Common myeloid progenitor, CD34-positive (primary cell): ENCODE measurements at regions of chr9 and their contacts with region 1.

Region 1: DNA sequence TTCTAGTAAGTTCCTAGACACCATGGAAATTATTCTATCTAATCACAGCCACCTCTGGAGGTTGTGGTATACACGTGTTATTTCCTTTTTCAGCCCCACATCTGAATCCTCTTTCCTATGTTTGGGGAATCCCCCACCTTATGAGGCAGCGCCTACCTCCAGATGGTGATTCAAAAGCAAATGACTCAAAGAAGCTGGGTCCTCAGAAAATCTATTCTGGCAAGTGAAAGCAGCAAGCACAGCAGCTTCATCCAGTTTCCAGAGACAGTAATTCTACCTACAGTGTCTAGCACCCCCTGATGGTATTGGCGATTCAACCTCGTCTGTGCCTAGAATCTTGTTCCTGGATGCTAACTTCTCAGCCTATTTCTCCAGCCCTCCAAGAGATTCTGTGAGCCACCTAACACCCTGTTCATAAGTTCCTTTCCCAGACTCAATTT is 43.0 kb downstream of the STRBP start:
- DNase-seq: peak; percentile 79 to 94 (median 93)
- H3K4me3 ChIP-seq: no peak overlapping the region
- H3K27ac ChIP-seq: no peak overlapping the region
- H3K4me1 ChIP-seq: peaks cover 2 to 13% (median 6%) of the 10 kb centered on the region in 4 experiments
- H3K27me3 ChIP-seq: no peaks in the 10 kb centered on the region

Region 2: GRCh38 chr9:123033864-123034601 is 191.4 kb before region 1 on chr9:
- CTCF ChIA-PET with region 1: no interaction called
- POLR2A ChIA-PET with region 1: no interaction called
- DNase-seq: peak; percentile 74 to 93 (median 87)
- H3K4me3 ChIP-seq: peak overlapping the region; percentile 58 to 88 (median 80)
- H3K27ac ChIP-seq: peak overlapping the region; percentile 79 to 92
- H3K4me1 ChIP-seq: peaks cover 42 to 91% (median 59%) of the 10 kb centered on the region in 4 experiments
- H3K27me3 ChIP-seq: no peaks in the 10 kb centered on the region

Region 3: GRCh38 chr9:123191260-123192079 is 33.9 kb before region 1 on chr9:
- CTCF ChIA-PET with region 1: interaction called, 3 read pairs
- POLR2A ChIA-PET with region 1: interaction called, 12 read pairs
- DNase-seq: peak in 2 of 3 donors; percentile 43 to 56
- H3K4me3 ChIP-seq: no peak overlapping the region
- H3K27ac ChIP-seq: peak overlapping the region in 1 of 2 experiments; percentile 31
- H3K4me1 ChIP-seq: no peaks in the 10 kb centered on the region
- H3K27me3 ChIP-seq: no peaks in the 10 kb centered on the region